Cardiac septum (tissue), 1 donor: ENCODE measurements at regions of chr5 and their contacts with region 1.

Region 1: GRCh38 chr5:116788851-116789403 is 214.3 kb upstream of the SEMA6A start:
- DNase-seq: no peak

Region 2: GRCh38 chr5:116502651-116503095 is 286.3 kb before region 1 on chr5:
- intact Hi-C with region 1: no loop called
- DNase-seq: no peak

Region 3: DNA sequence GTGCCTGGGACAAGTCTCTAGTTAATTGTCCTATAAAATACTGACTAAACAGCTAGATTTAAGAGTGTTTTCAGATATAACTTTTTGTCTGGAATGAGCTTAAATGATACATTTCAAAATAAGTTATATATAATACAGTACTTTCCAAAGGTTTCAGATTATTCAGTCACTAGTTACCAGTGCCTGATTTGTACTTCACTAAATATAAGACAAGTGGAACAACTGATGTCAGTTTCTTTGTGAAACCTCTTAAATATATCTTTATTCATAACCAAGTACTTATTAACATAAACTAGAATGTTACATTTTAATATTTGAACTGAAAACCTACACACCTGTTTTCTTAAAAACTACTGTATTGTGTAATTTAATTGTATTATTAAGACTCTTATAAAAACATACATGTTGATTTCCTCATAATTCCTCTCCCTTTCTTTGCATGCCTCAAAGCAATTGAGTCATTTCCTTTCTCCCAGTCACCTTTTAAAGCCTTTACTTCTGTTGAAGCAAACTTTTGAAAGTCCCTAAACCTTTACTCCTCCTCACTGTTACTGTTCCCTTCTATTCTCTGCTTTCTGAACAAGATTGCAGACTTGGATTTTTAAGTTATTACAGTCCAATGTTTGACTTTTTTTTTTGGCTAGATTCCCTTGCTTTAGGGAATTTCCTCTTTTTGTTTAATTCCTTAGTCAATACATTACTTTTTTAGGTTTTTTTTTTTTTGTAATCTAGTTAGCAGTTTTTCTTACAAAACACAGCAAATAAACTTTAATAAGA is 205.7 kb before region 1 on chr5:
- intact Hi-C with region 1: loop called (anchors 5 kb)
- DNase-seq: no peak

Region 4: DNA sequence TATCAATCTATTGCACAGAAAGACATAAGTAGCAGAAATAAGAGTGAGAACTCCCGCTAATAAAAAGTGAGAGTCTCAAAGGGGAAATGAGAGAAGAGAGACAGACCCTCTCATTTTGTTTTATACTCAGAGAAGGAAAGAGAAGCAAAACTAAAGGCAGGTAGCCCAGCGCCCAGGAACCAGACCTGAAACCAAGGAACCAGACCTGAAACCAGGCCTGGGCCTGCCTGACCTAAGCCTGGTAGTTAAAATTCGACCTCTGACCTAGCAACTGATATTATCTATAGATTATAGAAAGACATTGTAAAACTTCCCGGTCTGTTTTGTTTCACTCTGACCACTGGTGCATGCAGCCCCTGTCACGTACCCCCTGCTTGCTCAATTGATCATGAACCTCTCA is 79.8 kb before region 1 on chr5:
- intact Hi-C with region 1: no loop called
- DNase-seq: no peak

Region 5: GRCh38 chr5:116947691-116948528 is 159.0 kb after region 1 on chr5:
- intact Hi-C with region 1: loop called (anchors 5 kb)
- DNase-seq: peak; percentile 81

Region 6: GRCh38 chr5:117013280-117013877 is 224.5 kb after region 1 on chr5:
- intact Hi-C with region 1: no loop called
- DNase-seq: no peak